ENCODE measurements at regions of chr15 and their contacts with region 1.

Region 1: DNA sequence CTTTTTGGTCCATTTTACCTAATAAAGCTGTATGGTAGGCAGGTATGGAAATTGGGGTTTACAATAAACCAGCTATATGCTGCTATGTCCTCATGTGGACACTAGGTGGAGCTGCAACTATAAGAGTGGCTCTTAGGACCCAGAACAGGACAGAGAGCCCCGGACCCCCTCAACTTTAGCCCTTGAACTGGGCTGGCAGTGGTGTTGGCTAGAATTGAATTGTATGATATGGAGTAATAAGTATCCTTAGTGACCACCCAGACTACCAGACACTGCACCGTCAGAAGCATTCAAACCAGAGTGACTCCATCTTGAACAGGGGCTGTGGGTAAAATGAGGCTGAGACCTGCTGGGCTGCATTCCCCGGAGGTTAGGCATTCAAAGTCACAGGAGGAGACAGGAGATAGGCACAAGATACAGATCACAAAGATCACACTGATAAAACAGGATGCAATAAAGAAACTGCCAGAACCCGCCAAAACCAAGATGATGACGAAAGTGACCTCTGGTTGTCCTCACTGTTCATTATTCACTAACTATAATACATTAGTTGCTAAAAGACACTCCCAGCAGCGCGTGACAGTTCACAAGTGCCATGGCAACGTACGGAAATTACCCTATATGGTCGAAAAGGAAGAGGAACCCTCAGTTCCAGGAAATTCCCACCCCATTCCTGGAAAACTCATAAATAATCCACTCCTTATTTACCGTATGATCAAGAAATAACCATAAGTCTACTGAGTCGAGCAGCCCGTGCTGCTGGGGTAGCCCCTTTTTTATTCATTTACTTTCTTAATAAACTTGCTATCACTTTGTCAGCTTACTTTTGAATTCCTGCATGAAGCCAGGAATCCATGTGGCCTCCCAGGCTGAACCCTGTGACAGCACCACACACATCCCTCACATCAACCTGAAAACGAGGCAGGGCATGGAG is 68.7 kb upstream of the BLM start:
- DNase-seq: peak; percentile 87 to 92
- H3K4me3 ChIP-seq: no peak overlapping the region
- H3K27ac ChIP-seq: peak overlapping the region in 1 of 2 donors; percentile 22
- H3K4me1 ChIP-seq: peaks cover 0 to 11% (median 7%) of the 10 kb centered on the region in 4 donors
- H3K27me3 ChIP-seq: no peaks in the 10 kb centered on the region
- CTCF ChIP-seq: peak; percentile 91 to 93

Region 2: DNA sequence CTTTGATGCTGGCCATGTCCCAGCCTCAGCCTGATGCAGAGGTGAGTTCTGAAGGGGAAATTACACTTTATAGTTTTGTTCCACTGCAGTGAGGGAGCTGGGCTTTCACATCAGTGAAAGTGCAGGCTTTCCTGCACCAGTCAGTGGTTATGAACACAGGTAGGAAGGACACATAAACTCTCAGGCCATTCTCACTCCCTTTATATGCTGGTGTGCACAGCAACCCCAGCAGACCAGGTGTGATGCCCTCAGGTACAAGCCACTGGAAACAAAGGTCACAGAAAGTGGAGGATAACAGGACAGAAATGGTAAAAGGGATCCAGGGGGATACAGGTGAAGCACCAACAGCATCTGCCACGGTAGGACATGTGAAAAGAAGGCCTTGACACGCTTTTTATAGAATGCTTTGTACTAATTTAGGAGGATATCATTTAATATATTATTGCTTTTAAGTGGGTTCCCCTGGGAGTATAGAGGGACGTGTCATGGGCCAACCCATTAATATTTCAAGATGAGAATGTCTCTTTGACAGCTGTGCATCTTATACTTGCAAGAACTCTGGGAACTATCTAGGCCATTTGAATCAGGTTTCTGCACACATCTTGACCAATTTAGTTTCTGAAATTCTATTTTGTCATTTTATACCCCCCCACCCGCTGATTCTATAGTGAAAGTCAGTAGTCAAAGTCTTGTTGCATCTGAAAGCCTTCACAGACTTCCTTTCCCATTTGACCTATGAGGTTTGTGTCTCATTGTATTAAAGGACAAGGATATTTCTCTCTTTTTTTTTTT is 43.8 kb after region 1 on chr15:
- intact Hi-C with region 1: loop called (anchors 5 kb)
- DNase-seq: no peak
- H3K4me3 ChIP-seq: no peak overlapping the region
- H3K27ac ChIP-seq: no peak overlapping the region
- H3K4me1 ChIP-seq: no peaks in the 10 kb centered on the region
- H3K27me3 ChIP-seq: no peaks in the 10 kb centered on the region
- CTCF ChIP-seq: no peak

Region 3: DNA sequence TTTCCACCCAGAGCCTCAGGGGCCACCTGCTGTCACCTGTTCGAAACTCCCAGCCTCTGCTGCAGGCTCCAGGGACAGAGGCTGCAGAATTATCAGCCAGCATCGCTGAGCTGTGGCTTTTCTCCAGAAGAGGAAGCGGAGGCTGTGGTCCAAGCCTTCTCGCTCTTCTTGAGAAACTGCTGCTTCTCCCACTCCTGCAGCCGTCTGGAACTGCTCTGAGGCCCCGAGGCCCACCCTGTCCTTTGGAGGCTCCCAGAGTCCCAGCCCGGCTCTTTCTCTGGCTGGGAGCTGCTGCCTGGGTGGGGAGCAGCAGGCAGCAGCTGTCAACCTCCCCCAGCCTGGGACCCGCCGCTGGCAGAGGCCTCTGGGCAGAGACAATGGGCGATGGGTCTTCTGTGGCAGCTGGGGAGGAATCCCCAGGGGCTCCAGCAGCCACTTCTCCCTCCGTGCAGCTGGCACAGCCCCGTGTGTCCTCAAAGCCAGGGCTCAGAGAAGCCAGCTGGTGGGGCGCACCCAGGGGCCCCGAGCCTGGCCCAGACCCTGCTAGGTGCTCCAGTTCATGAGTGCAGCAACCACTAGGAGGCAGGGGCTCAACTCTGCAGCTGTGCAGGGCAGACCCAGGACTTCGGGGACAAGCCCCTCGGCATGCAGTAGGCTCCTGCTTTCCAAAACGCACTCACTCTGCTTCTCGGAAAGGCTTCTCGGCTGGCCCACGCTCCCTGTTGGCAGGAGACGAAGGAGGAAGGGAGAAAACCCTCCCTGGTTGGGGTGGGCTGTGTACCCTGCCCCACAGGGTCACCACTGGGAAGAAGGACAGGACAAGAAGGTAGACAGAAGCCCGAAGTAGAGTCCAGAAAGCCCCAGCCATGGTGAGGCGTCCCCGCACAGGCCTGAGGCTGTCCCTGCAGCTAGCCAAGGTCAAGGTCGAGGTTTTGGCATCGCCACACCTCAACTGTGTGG is 170.1 kb after region 1 on chr15:
- intact Hi-C with region 1: no loop called
- DNase-seq: no peak
- H3K4me3 ChIP-seq: no peak overlapping the region
- H3K27ac ChIP-seq: no peak overlapping the region
- H3K4me1 ChIP-seq: peaks cover 0 to 12% (median 0%) of the 10 kb centered on the region in 4 donors
- H3K27me3 ChIP-seq: peaks cover 0 to 3% of the 10 kb centered on the region in 2 donors
- CTCF ChIP-seq: no peak

Region 4: GRCh38 chr15:90886041-90886614 is 237.7 kb after region 1 on chr15:
- intact Hi-C with region 1: loop called (anchors 2 kb)
- DNase-seq: peak; percentile 80 to 86
- H3K4me3 ChIP-seq: peak overlapping the region; percentile 54 to 55
- H3K27ac ChIP-seq: peak overlapping the region; percentile 86 to 98
- H3K4me1 ChIP-seq: peaks cover 0 to 38% (median 25%) of the 10 kb centered on the region in 4 donors
- H3K27me3 ChIP-seq: no peaks in the 10 kb centered on the region
- CTCF ChIP-seq: peak; percentile 96 to 97